BJ (cell line): ENCODE measurements at regions of chr3 and their contacts with region 1.

Region 1: DNA sequence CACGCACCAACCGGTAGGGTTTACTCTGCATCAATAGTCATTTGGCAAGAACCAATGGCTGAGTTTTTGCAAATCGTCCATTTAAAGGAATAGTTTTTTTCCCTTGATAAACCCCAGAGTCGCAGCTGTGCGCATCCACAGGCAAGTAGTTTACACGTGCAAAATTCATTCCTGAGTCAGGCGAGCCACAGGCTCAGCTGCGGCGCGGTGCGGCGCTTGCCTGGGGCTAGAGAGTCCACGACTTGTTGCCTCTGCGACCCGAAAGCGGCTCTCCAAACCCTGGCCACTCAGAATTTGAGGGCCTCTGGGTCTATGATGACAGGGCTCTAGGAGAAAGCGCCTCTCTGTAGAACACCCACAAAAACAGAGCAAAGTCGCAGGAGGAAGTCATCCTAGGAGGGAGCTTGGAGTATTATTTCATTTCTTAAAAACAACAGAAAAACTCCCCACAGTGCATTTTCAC is 36.7 kb downstream of the ZIC4 start:
- DNase-seq: no peak
- H3K4me3 ChIP-seq: no peak overlapping the region
- H3K27me3 ChIP-seq: peaks cover 56% of the 10 kb centered on the region
- CTCF ChIP-seq: no peak

Region 2: GRCh38 chr3:147298511-147298982 is 71.1 kb before region 1 on chr3:
- CTCF ChIA-PET with region 1: no interaction called
- POLR2A ChIA-PET with region 1: no interaction called
- DNase-seq: peak; percentile 97
- H3K4me3 ChIP-seq: no peak overlapping the region
- H3K27me3 ChIP-seq: no peaks in the 10 kb centered on the region
- CTCF ChIP-seq: no peak

Region 3: DNA sequence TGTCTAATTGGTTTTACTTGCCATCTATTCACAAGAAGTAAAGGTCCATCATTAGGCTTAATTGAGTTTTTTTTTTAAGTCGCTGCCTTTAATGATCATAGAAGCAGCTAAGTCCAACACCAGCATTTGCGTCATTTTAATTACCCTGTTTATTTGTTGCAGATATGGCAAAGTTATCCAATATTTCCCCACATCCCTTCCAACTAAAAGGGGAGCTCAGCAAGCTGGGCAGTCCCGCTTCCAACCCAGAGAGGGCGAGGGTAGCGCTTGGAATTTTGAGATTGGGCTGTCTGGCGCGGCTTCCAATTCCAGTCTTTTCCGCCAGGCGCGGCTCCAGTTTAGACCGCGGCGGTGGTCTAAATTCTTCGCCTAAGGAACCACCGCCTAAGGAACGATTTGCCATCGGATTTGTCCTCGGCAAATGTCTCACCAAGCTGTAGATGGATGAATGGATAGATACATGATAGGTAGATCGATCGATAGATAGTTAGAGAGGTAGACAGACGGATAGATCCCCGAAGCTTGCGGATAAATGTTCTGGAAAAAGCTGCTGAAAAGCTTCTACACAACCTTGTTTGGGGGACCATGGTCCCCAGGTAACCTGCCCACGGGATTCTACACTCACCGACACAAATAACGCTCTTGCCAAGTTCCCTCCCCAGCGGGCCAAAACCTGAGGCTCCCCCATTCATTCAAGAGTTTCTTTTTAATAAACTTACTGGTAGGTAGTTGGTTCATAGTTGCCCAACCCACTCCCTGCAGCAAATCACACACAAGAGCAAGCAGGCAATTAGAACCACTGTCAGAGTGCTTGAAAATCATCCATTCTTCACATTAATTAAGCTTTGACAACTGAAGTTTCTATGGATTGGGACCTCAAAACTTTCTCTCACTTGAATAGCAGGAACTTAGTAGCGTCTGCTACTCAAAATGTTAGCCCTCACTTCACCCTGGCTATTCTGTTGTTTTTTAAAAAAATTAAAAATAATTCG is 12.5 kb before region 1 on chr3:
- CTCF ChIA-PET with region 1: interaction called, 10 read pairs
- POLR2A ChIA-PET with region 1: no interaction called
- DNase-seq: no peak
- H3K4me3 ChIP-seq: no peak overlapping the region
- H3K27me3 ChIP-seq: peaks cover 45% of the 10 kb centered on the region
- CTCF ChIP-seq: peak; percentile 8; the same call in 1 of the 2 replicates